Common myeloid progenitor, CD34-positive (primary cell): ENCODE measurements at regions of chr19 and their contacts with region 1.

Region 1: DNA sequence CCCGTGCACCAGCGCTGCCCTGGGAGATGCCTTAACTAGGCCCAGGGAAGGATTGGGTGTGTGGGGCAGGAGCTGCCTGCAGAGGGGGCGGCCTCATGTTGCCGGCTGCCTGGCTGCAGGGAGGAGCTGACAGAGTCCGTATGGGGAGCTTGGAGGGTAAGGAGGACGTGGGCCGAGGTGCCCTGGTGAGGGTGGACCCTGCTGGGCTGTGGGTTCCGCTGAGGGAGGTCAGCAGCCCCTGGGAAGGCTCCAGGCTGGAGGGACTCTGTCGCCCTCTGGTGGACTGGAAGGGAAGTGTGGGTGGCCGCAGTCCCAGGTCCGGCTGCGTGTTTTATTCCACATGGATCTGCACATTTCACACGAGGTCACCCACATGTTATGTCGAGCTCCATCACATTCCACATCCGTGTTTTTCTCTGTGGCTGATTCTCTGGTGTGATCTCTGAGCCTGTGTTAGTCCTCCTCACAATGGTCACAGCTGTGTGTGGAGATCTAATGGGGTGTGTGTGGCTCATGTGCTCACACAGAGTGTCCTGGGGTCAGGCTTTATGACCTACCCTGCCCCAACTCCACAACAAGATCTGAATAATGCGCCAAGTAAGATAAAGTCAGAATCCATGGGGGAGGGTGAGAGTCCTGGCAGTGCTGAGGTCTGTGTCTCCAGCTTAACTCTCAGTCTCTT is 1.8 kb upstream of the CEACAM8 start:
- DNase-seq: peak; percentile 18 to 22 (median 20)
- H3K4me3 ChIP-seq: no peak overlapping the region
- H3K27ac ChIP-seq: no peak overlapping the region
- H3K4me1 ChIP-seq: peaks cover 0 to 4% (median 0%) of the 10 kb centered on the region in 4 experiments
- H3K27me3 ChIP-seq: peaks cover 0 to 5% (median 0%) of the 10 kb centered on the region in 5 experiments

Region 2: DNA sequence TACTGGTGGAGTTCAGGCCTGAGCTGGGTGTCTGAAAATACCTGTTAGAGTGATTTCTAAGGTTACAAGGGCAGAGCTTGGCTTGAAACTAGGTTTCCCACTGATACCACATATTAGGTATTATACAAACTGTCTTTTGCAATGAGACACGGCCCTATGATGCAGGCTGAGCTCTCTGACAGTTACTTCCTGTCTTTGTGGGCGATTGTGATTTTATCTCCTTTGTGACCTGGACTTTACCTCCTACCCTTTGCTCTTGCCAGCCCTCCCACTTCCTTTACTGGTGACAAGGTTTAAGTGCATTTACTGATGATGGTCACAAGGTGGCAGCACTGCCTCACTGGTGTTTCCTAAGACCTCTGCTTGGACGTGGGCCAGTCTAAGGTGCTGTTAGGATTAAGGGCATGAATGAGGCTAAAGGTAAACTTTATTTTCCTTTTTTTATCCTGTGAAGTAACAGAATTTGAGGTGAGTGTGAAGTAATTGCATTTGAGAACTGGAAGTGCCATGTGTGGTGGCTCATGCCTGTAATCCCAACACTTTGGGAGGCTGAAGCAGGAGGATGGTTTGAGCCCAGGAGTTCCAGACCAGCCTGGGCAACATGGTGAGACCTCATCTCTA is 146.1 kb before region 1 on chr19:
- CTCF ChIA-PET with region 1: interaction called, 17 read pairs
- POLR2A ChIA-PET with region 1: no interaction called
- DNase-seq: peak; percentile 89 to 95 (median 91)
- H3K4me3 ChIP-seq: no peak overlapping the region
- H3K27ac ChIP-seq: no peak overlapping the region
- H3K4me1 ChIP-seq: peaks cover 0 to 26% (median 18%) of the 10 kb centered on the region in 4 experiments
- H3K27me3 ChIP-seq: no peaks in the 10 kb centered on the region

Region 3: GRCh38 chr19:42563352-42564210 is 33.0 kb before region 1 on chr19:
- CTCF ChIA-PET with region 1: interaction called, 27 read pairs
- POLR2A ChIA-PET with region 1: no interaction called
- DNase-seq: peak; percentile 45 to 58 (median 52)
- H3K4me3 ChIP-seq: no peak overlapping the region
- H3K27ac ChIP-seq: no peak overlapping the region
- H3K4me1 ChIP-seq: peaks cover 6 to 24% (median 13%) of the 10 kb centered on the region in 4 experiments
- H3K27me3 ChIP-seq: peaks cover 0 to 3% (median 0%) of the 10 kb centered on the region in 5 experiments

Region 4: GRCh38 chr19:42571116-42571515 is 25.4 kb before region 1 on chr19:
- CTCF ChIA-PET with region 1: interaction called, 27 read pairs
- POLR2A ChIA-PET with region 1: no interaction called
- DNase-seq: no peak
- H3K4me3 ChIP-seq: no peak overlapping the region
- H3K27ac ChIP-seq: no peak overlapping the region
- H3K4me1 ChIP-seq: peaks cover 6 to 19% (median 10%) of the 10 kb centered on the region in 4 experiments
- H3K27me3 ChIP-seq: no peaks in the 10 kb centered on the region

Region 5: GRCh38 chr19:42584466-42584865 is 12.1 kb before region 1 on chr19:
- CTCF ChIA-PET with region 1: interaction called, 13 read pairs
- POLR2A ChIA-PET with region 1: no interaction called
- DNase-seq: no peak
- H3K4me3 ChIP-seq: no peak overlapping the region
- H3K27ac ChIP-seq: no peak overlapping the region
- H3K4me1 ChIP-seq: no peaks in the 10 kb centered on the region
- H3K27me3 ChIP-seq: peaks cover 0 to 3% (median 0%) of the 10 kb centered on the region in 5 experiments